Right ventricle myocardium superior (tissue), 1 donor: ENCODE measurements at regions of chr2 and their contacts with region 1.

Region 1: DNA sequence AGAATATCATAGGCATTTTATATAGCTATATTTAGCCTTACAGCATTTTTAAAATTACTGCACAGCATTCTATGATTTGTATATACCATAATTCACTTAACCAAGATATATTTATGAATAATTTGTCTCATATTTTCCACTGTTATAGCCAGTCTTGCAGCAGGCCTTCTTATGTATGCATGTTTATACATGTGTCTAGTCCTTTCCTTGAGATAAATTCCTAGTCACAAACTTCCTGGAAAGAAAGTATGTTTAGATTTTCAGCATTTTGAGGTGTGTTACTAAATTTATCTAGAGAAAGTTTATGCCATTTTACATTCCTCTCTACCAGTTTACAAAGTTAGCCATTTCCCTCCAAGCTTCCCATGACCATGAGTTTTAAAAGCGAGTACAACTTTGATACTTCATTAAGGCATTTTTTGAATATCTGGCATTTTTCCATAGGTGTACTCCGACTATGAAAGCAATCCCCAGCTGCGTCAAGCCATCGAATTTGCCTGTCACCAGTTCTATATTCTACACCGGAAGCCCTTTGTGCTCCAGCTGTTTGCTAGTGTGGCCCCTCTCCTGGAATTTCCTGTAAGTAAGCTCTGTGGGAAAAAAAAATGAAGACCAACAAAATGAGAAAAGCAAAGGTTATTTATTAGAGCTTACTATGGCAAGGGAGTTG is 59.4 kb upstream of the RPE start:
- DNase-seq: no peak
- ATAC-seq: no peak

Region 2: DNA sequence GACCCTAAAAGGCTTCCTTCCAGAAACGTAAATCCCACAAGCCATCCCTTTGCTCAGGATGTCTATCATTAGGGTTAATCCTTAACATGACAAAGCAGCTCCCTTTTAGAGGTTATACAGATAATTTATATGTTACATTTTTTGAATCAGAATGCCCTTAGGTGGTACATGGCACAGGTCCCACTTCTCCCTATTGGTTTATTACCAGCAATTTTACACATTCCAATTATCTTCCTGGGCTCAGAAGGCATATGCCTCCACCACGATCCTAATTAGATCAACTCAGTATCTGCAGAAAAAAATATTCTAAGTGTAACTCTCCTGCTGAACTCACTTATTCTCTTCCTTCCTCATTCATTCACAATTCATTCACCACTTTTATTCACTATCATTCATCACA is 1026.2 kb before region 1 on chr2:
- intact Hi-C with region 1: no loop called
- DNase-seq: no peak
- ATAC-seq: no peak

Region 3: DNA sequence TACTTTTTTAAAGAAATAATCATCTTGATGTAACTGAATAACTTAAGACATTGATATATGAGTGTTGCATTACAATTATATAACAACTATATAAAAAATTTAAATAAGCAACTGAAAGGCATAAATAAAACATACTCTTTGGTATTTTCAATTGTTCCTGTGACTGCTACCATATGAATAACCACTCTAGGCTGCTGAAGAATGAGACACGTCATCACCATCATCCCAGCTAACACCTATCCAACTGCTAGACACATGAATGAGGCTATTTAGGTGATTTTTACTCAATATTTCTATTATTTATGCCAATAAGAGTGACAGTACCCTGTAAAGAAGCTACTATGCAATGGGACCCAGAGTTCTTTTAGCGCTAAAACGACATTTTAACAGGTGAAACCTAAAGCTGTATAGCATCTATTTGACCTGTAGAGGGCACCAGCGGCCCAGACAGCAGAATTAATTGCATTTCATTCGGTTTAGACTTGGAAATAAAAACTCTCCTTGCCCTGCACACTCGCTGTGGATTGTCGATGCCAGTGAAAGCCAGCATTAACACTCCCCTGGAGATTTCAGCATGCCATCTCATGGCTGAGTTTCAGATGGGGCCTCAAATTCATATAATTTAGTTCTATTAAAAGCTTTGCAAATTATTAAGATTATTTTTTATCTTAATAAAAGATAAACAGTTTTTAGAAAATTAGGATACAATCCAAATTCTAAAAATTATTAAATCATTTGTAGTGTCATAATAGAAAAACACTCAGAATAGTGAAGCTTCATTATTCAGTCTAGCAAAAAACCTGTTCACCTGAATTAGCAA is 608.7 kb before region 1 on chr2:
- intact Hi-C with region 1: loop called (anchors 10 kb)
- DNase-seq: peak; percentile 48
- ATAC-seq: peak; percentile 69

Region 4: DNA sequence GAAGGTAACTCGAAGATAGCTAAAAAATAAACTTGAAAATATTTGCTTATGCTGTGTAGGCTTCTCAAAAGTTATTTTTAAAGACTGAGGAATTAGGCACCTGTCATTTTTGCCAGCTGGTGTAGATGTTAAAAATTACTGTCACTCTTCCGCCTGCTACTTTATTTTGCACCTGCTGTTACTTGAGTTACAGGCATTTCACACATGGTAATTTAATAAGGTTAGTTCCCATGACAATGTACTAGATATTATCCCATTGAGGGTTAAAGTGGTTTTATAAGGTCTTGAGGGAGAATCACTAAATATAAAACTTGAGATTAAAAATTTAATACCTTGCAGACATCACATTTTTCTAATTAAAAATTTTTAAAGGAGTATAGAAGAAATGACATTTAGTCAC is 345.3 kb after region 1 on chr2:
- intact Hi-C with region 1: no loop called
- DNase-seq: no peak
- ATAC-seq: no peak